Naive thymus-derived CD4-positive, alpha-beta T cell (primary cell): ENCODE measurements at regions of chr7 and their contacts with region 1.

Region 1: GRCh38 chr7:149873074-149873969 is at the start of gene ATP6V0E2:
- DNase-seq: peak; percentile 81 to 92 (median 85)
- ATAC-seq: peak; percentile 84
- H3K4me3 ChIP-seq: peak within 1 kb of the TSS; percentile 76
- H3K4me3 Mint-ChIP-seq: peak within 1 kb of the TSS; percentile 79 to 95 (median 91)
- H3K27ac ChIP-seq: peak within 1 kb of the TSS; percentile 88
- H3K27ac Mint-ChIP-seq: peak within 1 kb of the TSS; percentile 48 to 98 (median 92)
- H3K4me1 ChIP-seq: peaks cover 56% of the 10 kb centered on the region in 2 donors
- H3K4me1 Mint-ChIP-seq: peaks cover 45 to 89% (median 81%) of the 10 kb centered on the region in 7 donors
- H3K27me3 ChIP-seq: no peaks in the 10 kb centered on the region
- H3K27me3 Mint-ChIP-seq: no peaks in the 10 kb centered on the region
- total RNA-seq, gene ATP6V0E2: 32.7 to 84.0 (median 55.4) TPM

Region 2: GRCh38 chr7:149771721-149772240 is 101.5 kb before region 1 on chr7:
- CTCF ChIA-PET with region 1: no interaction called
- POLR2A ChIA-PET with region 1: no interaction called
- intact Hi-C with region 1: loop called (anchors 2 to 5 kb)
- DNase-seq: peak; percentile 74 to 89 (median 85)
- ATAC-seq: peak; percentile 94
- H3K4me3 ChIP-seq: peak overlapping the region; percentile 72
- H3K4me3 Mint-ChIP-seq: peak overlapping the region; percentile 16 to 88 (median 78)
- H3K27ac ChIP-seq: peak overlapping the region; percentile 71
- H3K27ac Mint-ChIP-seq: peak overlapping the region in 6 of 9 donors; percentile 10 to 70 (median 42)
- H3K4me1 ChIP-seq: peaks cover 5 to 8% of the 10 kb centered on the region in 2 donors
- H3K4me1 Mint-ChIP-seq: peaks cover 2 to 29% (median 21%) of the 10 kb centered on the region in 7 donors
- H3K27me3 ChIP-seq: no peaks in the 10 kb centered on the region
- H3K27me3 Mint-ChIP-seq: peaks cover 0 to 46% (median 0%) of the 10 kb centered on the region in 5 donors

Region 3: DNA sequence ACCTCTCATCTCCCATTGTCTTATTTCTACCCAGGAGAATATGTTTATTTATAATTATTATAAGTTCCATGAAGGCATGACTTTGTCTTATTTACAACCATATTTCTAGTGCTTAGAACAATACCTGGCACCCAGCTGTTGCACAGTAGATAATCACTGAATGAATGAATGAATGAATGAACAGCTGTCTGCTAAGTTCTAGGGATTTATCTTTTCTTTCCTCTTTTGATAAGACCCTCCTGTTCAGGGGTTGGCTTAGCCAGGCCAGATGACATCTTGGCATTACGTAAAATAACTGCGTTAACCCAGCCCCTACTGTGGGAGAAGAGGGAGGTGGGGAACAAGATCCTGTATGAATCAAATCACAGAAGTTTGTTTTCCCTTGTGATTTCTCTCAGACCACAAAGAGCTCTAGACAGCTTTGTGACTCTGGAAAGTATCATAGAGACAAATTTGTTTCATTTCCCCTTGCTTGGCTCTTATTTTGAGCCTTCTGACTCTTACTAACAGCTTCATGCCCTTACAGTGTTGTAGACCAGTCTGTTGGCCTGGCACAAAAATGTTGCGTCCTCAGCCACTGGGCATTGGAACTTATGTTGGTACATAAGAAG is 26.8 kb before region 1 on chr7:
- CTCF ChIA-PET with region 1: interaction called, 3 read pairs
- POLR2A ChIA-PET with region 1: interaction called, 44 read pairs
- intact Hi-C with region 1: no loop called
- DNase-seq: no peak
- ATAC-seq: no peak
- H3K4me3 ChIP-seq: no peak overlapping the region
- H3K4me3 Mint-ChIP-seq: peak overlapping the region in 2 of 10 donors; percentile 11 to 27
- H3K27ac ChIP-seq: no peak overlapping the region
- H3K27ac Mint-ChIP-seq: peak overlapping the region in 8 of 9 donors; percentile 11 to 81 (median 71)
- H3K4me1 ChIP-seq: peaks cover 0 to 49% of the 10 kb centered on the region in 2 donors
- H3K4me1 Mint-ChIP-seq: peaks cover 16 to 83% (median 68%) of the 10 kb centered on the region in 7 donors
- H3K27me3 ChIP-seq: no peaks in the 10 kb centered on the region
- H3K27me3 Mint-ChIP-seq: no peaks in the 10 kb centered on the region

Region 4: DNA sequence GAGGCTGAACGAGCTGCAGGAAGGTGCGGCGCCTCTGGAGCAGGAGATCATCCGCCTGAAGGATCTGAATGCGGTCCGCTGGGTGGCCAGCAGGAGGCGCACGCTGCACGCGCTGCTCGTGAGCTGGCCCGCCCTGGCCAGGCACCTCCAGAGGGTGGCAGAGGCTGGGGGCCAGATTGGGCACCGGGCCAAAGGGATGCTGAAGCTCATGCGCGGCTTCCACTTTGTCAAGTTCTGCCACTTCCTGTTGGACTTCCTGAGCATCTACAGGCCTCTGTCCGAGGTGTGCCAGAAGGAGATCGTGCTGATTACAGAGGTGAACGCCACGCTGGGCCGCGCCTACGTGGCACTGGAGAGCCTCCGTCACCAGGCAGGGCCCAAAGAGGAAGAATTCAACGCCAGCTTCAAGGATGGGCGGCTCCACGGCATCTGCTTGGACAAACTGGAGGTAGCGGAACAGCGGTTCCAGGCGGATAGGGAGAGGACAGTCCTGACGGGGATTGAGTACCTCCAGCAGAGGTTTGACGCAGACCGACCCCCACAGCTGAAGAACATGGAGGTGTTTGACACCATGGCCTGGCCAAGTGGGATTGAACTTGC is 11.8 kb before region 1 on chr7:
- CTCF ChIA-PET with region 1: interaction called, 3 read pairs
- POLR2A ChIA-PET with region 1: interaction called, 36 read pairs
- intact Hi-C with region 1: loop called (anchors 1 kb)
- DNase-seq: no peak
- ATAC-seq: no peak
- H3K4me3 ChIP-seq: no peak overlapping the region
- H3K4me3 Mint-ChIP-seq: peak overlapping the region in 1 of 10 donors; percentile 6
- H3K27ac ChIP-seq: no peak overlapping the region
- H3K27ac Mint-ChIP-seq: peak overlapping the region in 6 of 9 donors; percentile 10 to 83 (median 50)
- H3K4me1 ChIP-seq: peaks cover 29 to 69% of the 10 kb centered on the region in 2 donors
- H3K4me1 Mint-ChIP-seq: peaks cover 36 to 93% (median 83%) of the 10 kb centered on the region in 7 donors
- H3K27me3 ChIP-seq: no peaks in the 10 kb centered on the region
- H3K27me3 Mint-ChIP-seq: no peaks in the 10 kb centered on the region